ENCODE measurements at regions of chr2 and their contacts with region 1.

Region 1: DNA sequence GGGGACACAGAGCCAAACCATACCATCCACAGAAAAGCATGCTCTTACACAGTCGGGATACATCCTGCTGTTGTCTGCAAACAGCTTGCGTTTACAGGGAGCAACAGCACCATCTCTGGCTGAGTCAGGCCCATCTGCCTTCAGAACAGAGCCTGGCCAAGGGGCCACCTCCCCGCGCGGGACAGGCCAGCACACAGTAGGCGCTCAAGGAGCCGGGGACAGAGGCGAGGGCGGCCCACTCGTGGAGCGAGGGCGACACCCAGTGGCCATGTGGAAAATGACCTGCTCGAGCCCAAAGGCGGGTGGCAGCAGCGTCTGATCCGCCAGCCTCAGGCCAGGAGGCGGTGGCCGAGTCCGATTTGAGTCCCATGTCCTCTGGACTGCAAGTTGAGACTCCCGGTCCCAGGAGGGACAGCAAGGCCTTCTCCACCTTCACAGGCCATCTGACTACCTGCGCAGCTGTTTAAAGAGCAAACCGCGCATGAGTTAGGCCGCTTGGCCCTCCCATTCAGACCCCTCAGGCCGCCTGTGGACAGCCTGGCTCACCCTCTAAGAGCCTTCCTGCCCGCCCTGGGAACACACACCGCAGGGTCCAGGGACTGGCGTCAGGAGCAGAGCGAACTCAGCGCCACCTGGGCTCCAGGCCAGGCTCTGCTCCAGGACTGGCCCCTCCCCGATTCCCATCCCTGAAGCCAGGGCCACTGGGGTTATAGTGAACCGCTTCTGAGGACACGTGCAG is 38.3 kb downstream of the TTC32 start:
- DNase-seq: peak; percentile 54
- H3K4me3 ChIP-seq: no peak overlapping the region
- H3K27ac ChIP-seq: no peak overlapping the region
- H3K4me1 ChIP-seq: no peaks in the 10 kb centered on the region
- H3K27me3 ChIP-seq: peaks cover 6% of the 10 kb centered on the region
- CTCF ChIP-seq: peak; percentile 94

Region 2: DNA sequence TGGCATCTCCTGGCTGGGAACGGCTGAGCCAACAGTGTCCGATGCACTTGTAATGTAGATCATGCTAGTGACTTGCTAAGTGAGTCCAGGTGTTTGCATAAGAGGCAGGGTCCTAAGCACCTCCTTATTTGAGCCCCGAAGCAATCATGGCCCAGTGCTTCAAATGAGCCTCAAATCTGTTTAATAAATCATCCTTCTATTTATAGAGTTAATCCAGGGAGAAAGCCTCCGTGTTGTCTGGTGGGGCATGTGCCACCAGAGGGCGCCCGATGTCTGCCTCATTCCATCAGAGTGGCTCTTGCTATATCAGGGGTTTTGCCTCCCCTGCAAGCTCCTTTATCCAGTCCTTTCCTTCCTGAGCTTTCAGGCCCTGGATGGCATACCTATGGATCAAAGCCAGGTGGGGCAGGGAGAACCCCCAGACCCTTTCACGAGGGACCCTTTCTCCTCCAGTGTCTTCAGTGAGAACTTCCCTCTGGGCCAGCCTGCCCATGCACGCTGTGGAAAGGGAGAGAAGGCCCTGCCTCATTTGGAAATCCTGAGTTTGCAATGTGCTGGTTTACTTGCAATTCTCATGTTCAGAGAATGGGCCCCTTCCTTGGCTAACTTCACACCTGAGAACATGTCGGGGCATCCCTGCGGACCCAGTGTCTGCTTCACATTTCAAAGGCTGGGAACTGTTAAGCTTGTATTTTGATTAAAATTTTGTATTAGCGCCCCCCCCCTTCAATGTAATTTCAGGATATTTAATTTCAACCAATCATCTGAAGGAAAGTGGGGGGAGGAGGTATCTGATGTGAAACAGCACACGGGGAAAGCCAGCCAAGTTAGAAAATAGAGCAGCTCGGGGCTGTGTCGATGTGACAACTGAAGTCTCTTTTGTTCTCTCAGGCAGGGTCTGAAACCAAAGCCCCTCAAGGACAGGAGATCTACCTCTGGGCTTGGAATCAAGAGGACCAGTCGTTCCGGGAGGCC is 1342.7 kb before region 1 on chr2:
- CTCF ChIA-PET with region 1: no interaction called
- POLR2A ChIA-PET with region 1: interaction called, 5 read pairs
- intact Hi-C with region 1: loop called (anchors 2 kb)
- DNase-seq: peak; percentile 81
- H3K4me3 ChIP-seq: no peak overlapping the region
- H3K27ac ChIP-seq: no peak overlapping the region
- H3K4me1 ChIP-seq: no peaks in the 10 kb centered on the region
- H3K27me3 ChIP-seq: no peaks in the 10 kb centered on the region
- CTCF ChIP-seq: peak; percentile 95

Region 3: GRCh38 chr2:18749912-18750526 is 1113.5 kb before region 1 on chr2:
- CTCF ChIA-PET with region 1: no interaction called
- POLR2A ChIA-PET with region 1: no interaction called
- intact Hi-C with region 1: loop called (anchors 5 kb)
- DNase-seq: peak; percentile 65
- H3K4me3 ChIP-seq: no peak overlapping the region
- H3K27ac ChIP-seq: no peak overlapping the region
- H3K4me1 ChIP-seq: no peaks in the 10 kb centered on the region
- H3K27me3 ChIP-seq: peaks cover 6% of the 10 kb centered on the region
- CTCF ChIP-seq: peak; percentile 88

Region 4: DNA sequence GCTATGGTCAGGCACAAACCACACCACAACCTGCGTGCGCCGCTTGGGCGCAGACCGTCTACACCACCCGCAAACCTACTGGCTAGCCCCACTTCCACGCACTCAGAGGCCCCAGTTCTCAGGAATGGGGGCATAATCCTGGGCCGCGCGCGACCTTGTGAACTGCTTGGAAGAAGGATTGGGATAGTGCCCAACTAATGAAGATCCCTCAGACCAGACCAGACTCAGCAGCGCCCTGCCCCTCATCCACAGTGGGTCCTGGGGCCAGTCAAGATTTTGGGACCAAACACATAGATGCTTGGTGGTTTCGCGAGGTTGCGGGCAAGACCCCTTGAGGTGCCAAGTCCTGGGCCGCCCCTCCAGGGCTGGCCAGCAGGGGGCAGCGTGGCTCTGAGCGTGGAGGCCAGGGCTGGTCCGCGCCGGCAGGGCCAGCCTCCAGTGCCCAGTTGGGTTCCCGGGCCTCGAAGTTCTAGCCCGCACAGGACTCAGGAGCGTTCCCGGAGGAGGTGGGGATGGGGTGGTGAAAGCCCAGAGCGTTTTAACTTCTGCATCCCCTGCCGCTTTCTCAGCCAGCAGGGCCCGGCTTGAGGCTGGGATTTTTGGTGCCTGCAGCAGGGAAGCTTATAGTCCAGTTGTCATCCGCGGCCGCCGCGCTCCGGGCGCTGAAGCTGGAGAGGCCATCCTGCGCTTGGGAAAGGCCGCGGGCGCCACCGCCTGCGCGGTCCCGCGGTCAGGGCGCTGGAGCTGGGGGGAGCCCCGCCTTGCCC is 513.4 kb before region 1 on chr2:
- CTCF ChIA-PET with region 1: interaction called, 3 read pairs
- POLR2A ChIA-PET with region 1: no interaction called
- intact Hi-C with region 1: loop called (anchors 5 kb)
- DNase-seq: peak; percentile 48
- H3K4me3 ChIP-seq: peak overlapping the region; percentile 18
- H3K27ac ChIP-seq: no peak overlapping the region
- H3K4me1 ChIP-seq: peaks cover 9% of the 10 kb centered on the region
- H3K27me3 ChIP-seq: peaks cover 48% of the 10 kb centered on the region
- CTCF ChIP-seq: peak; percentile 92

Region 5: DNA sequence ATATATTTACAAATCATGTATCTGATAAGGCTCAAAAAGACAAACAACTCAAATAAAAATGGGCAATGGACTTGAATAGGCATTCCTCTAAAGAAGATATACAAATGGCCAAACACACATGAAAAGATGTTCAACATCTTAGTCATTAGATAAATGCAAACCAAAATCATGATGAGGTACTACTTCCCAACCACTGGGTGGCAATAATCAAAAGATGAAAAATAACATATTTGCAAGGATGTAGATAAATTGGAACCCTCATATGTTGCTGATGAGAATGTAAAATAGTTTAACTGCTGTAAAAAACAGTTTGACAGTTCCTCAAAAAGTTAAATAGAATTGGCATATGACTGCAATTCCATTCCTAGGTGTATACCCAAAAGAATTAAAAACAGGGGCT is 94.0 kb before region 1 on chr2:
- CTCF ChIA-PET with region 1: no interaction called
- POLR2A ChIA-PET with region 1: no interaction called
- intact Hi-C with region 1: loop called (anchors 5 kb)
- DNase-seq: peak; percentile 8
- H3K4me3 ChIP-seq: no peak overlapping the region
- H3K27ac ChIP-seq: no peak overlapping the region
- H3K4me1 ChIP-seq: no peaks in the 10 kb centered on the region
- H3K27me3 ChIP-seq: no peaks in the 10 kb centered on the region
- CTCF ChIP-seq: peak; percentile 45; the same call in 1 of the 2 replicates

Region 6: DNA sequence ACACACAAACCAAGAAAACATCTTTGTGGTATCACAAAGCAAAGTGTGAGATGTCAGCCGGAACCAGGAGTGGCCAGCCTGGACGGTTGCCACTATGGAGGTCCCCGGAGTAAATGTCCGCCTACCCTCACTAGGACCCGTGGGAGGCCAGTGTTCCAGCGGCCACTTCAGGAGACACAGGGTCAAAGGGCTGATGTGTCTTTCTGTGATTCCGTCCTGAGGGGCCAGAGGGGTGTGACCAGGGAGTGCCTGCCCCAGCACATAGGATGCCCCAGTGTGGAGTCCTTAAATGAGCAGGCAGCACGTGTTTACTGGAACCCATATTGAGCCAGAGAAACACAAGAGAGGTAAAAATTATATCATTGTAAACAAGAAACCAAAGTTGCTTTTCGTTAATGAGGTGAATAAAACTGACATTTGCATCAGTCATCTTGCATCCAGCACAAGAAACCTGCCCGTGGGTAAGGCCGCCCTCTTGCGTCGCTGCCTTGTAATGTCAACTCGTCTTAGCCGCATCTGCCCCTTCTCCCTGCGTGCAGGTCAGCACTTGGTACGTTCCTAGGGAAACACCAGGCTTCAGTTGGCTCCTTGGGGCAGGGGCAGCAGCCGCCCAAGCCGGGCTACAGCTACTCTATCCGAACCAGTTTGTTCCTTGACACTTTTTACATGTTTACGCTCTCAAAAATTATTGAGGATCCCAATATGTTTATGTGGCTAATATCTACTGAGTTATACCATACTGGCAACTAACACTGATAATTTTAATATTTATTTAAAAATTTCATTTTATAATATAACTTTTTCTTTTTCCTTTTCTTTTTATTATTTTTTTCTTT is 234.6 kb after region 1 on chr2:
- CTCF ChIA-PET with region 1: no interaction called
- POLR2A ChIA-PET with region 1: no interaction called
- intact Hi-C with region 1: loop called (anchors 10 kb)
- DNase-seq: peak; percentile 91
- H3K4me3 ChIP-seq: no peak overlapping the region
- H3K27ac ChIP-seq: no peak overlapping the region
- H3K4me1 ChIP-seq: peaks cover 12% of the 10 kb centered on the region
- H3K27me3 ChIP-seq: no peaks in the 10 kb centered on the region
- CTCF ChIP-seq: peak; percentile 96

Measured in A673 (cell line).